Activated CD8-positive, alpha-beta T cell treated with anti-CD3 and anti-CD28 coated beads for 36 hours (primary cell): ENCODE measurements at regions of chr12 and their contacts with region 1.

Region 1: DNA sequence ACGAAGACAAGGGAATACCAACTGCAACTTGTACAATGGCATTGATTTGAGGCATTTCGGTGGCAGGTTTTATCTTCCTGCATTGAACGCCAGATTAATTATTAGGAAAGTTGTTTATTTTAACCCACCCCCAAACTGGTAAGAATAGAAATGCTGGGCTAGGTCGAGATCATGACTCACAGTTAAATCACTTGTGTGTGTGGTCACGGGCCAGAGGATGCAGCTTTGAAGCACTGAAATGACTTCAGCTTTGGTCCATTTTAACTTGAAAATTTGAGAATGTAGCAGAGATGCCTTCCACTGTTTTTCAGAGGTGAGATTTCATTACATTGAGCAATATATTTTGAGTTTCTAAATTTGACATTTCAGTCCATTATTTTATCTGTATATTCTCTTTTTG is 23.6 kb upstream of the KCNH3 start:
- DNase-seq: no peak
- ATAC-seq: no peak
- H3K4me3 Mint-ChIP-seq: no peak overlapping the region
- H3K27ac Mint-ChIP-seq: no peak overlapping the region
- H3K4me1 Mint-ChIP-seq: peaks cover 10% of the 10 kb centered on the region
- H3K27me3 Mint-ChIP-seq: no peaks in the 10 kb centered on the region
- CTCF ChIP-seq: no peak

Region 2: DNA sequence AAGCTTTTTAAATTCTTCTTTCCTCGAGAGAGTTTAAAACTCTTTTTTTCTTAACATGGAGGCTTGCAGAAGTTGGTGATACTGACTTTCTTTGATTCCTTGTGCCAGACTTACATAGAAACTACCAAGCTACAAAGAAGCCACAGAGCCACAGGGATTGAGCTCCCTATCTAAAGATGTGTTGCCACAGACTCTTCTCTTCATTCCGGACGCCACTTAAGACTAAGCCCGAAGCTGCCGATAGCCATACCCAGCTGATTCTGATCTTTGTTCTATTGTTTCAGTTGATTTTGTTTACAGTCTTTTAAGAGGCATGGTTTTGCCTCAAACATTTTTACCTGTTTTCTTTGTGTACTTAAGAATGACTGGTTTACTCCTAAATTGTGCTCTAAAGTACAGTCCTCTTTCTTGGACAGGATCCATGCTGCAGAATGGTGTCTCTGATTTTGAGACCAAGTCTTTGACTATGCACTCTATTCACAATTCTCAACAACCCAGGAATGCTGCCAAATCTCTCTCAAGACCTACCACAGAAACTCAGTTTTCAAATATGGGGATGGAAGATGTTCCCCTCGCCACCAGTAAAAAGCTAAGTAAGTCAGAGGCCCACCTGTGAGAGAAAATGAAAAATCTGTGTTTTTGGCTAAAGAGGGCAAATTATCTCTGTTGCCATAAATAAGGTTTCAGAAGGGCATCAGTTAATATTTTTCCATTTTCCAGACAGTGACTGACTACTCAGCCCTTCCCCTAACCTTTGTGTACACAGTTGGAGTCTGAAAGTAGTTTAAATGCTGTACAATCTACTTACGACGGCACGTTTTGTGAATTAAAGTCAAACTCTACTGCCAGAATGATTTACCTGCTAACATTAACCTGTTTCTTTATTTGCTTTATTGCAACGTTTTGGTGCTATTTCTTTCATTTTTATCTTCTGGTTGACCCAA is 18.6 kb before region 1 on chr12:
- CTCF ChIA-PET with region 1: interaction called, 12 read pairs
- POLR2A ChIA-PET with region 1: no interaction called
- intact Hi-C with region 1: no loop called
- DNase-seq: no peak
- ATAC-seq: no peak
- H3K4me3 Mint-ChIP-seq: no peak overlapping the region
- H3K27ac Mint-ChIP-seq: no peak overlapping the region
- H3K4me1 Mint-ChIP-seq: peaks cover 5% of the 10 kb centered on the region
- H3K27me3 Mint-ChIP-seq: no peaks in the 10 kb centered on the region
- CTCF ChIP-seq: no peak

Region 3: DNA sequence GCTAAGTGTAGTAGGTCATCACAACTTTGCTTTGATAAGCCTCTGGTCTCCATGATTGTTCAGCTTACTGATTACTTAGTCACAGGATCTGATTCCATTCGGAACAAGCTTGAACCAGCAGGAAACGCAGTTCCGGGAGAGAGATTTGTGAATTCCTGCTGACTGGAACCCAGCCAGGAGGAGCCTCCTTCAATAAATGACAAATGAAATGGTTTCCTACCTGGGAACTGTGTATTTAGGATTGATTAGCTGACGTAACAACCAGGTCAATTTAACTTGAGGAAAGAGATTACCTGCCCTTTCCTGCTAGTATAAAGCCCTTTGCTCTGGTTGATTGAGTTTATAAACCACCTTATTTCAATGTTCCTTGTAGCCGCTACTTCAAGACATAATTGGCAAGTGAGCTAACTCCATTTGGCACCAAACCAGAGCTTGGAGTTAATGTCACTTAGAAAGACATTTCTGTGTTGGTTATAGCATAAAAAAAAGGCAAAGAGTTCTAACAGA is 11.5 kb before region 1 on chr12:
- CTCF ChIA-PET with region 1: interaction called, 16 read pairs
- POLR2A ChIA-PET with region 1: no interaction called
- intact Hi-C with region 1: no loop called
- DNase-seq: no peak
- ATAC-seq: no peak
- H3K4me3 Mint-ChIP-seq: no peak overlapping the region
- H3K27ac Mint-ChIP-seq: no peak overlapping the region
- H3K4me1 Mint-ChIP-seq: peaks cover 12% of the 10 kb centered on the region
- H3K27me3 Mint-ChIP-seq: no peaks in the 10 kb centered on the region
- CTCF ChIP-seq: no peak

Region 4: GRCh38 chr12:49527361-49528130 is 12.3 kb after region 1 on chr12:
- CTCF ChIA-PET with region 1: interaction called, 27 read pairs
- POLR2A ChIA-PET with region 1: interaction called, 3 read pairs
- intact Hi-C with region 1: no loop called
- DNase-seq: no peak
- ATAC-seq: no peak
- H3K4me3 Mint-ChIP-seq: no peak overlapping the region
- H3K27ac Mint-ChIP-seq: no peak overlapping the region
- H3K4me1 Mint-ChIP-seq: no peaks in the 10 kb centered on the region
- H3K27me3 Mint-ChIP-seq: no peaks in the 10 kb centered on the region
- CTCF ChIP-seq: no peak

Region 5: DNA sequence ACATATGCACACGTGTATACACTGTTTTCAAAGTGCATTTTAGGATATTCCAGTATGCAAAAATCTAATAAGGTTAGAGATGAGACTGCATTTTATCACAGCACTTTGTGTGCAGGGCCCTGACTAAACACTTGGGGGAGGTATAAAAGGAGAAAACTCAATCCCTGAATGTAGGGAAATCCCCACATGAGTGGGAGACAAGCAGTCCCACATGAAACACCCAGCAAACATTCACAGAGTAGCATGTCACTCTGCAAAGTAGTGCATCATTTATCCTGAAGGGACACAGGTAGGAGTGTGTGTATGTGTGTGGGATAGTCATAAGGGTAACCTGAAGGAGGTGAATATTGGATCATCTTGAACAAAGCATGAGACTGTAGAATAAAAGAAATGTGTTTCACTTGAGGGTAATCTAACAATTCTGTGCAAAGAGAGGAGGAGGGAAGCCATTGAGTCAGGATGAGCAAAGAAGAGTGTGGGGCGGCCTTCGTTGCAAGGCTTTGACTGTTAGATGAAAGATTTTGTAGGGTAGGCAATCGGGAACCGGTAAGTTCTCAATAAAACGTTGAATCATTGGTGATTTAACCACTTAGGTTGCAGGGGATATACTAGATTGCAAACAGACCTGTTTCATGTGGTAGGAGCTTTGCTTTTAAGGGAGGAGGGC is 111.0 kb after region 1 on chr12:
- CTCF ChIA-PET with region 1: no interaction called
- POLR2A ChIA-PET with region 1: no interaction called
- intact Hi-C with region 1: no loop called
- DNase-seq: peak; percentile 33
- ATAC-seq: peak; percentile 6
- H3K4me3 Mint-ChIP-seq: no peak overlapping the region
- H3K27ac Mint-ChIP-seq: no peak overlapping the region
- H3K4me1 Mint-ChIP-seq: peaks cover 24% of the 10 kb centered on the region
- H3K27me3 Mint-ChIP-seq: peaks cover 4% of the 10 kb centered on the region
- CTCF ChIP-seq: peak; percentile 36

Region 6: GRCh38 chr12:49662998-49663843 is 148.0 kb after region 1 on chr12:
- CTCF ChIA-PET with region 1: no interaction called
- POLR2A ChIA-PET with region 1: no interaction called
- intact Hi-C with region 1: no loop called
- DNase-seq: peak; percentile 88
- ATAC-seq: peak; percentile 92
- H3K4me3 Mint-ChIP-seq: peak overlapping the region; percentile 67
- H3K27ac Mint-ChIP-seq: peak overlapping the region; percentile 97
- H3K4me1 Mint-ChIP-seq: peaks cover 79% of the 10 kb centered on the region
- H3K27me3 Mint-ChIP-seq: no peaks in the 10 kb centered on the region
- CTCF ChIP-seq: no peak

Region 7: DNA sequence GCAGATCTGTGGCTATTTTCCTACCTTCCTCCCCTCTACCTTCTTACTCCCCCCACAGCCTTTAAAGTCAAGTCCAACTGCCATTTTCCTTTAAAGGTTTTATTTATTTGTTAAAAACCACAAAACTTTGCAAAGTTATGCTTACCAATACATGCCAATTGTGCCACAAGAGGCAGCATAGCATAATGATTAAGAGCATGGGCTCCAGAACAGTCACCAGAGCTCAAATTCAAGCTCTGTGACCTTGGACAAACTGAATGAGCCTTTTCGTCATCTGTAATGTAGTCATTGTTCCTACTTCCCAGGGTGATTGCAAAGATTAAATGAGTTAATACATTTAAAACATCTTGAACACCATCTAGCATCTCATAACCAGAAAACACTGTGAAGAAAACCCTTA is 204.9 kb after region 1 on chr12:
- CTCF ChIA-PET with region 1: no interaction called
- POLR2A ChIA-PET with region 1: no interaction called
- intact Hi-C with region 1: no loop called
- DNase-seq: no peak
- ATAC-seq: no peak
- H3K4me3 Mint-ChIP-seq: no peak overlapping the region
- H3K27ac Mint-ChIP-seq: no peak overlapping the region
- H3K4me1 Mint-ChIP-seq: no peaks in the 10 kb centered on the region
- H3K27me3 Mint-ChIP-seq: peaks cover 3% of the 10 kb centered on the region
- CTCF ChIP-seq: no peak

Region 8: GRCh38 chr12:50025187-50026059 is 510.2 kb after region 1 on chr12 and contains the start of gene RACGAP1:
- CTCF ChIA-PET with region 1: no interaction called
- POLR2A ChIA-PET with region 1: no interaction called
- intact Hi-C with region 1: no loop called
- DNase-seq: peak; percentile 97
- ATAC-seq: peak; percentile 99
- H3K4me3 Mint-ChIP-seq: peak within 1 kb of the TSS; percentile 93
- H3K27ac Mint-ChIP-seq: peak within 1 kb of the TSS; percentile 97
- H3K4me1 Mint-ChIP-seq: peaks cover 18% of the 10 kb centered on the region
- H3K27me3 Mint-ChIP-seq: no peaks in the 10 kb centered on the region
- CTCF ChIP-seq: no peak
- total RNA-seq, gene RACGAP1: 113 to 117 TPM